ENCODE measurements at regions of chr3 and their contacts with region 1.

Region 1: GRCh38 chr3:8441969-8442559 is 59.6 kb upstream of the LMCD1 start:
- DNase-seq: peak in 2 of 4 donors; percentile 68 to 79
- ATAC-seq: peak; percentile 61
- H3K4me3 ChIP-seq: no peak overlapping the region
- H3K27ac ChIP-seq: no peak overlapping the region
- H3K4me1 ChIP-seq: peaks cover 26 to 27% of the 10 kb centered on the region in 2 donors
- H3K27me3 ChIP-seq: no peaks in the 10 kb centered on the region
- CTCF ChIP-seq: peak; percentile 50 to 70

Region 2: GRCh38 chr3:8550611-8551010 is 108.5 kb after region 1 on chr3:
- intact Hi-C with region 1: no loop called
- DNase-seq: no peak
- ATAC-seq: no peak
- H3K4me3 ChIP-seq: no peak overlapping the region
- H3K27ac ChIP-seq: peak overlapping the region in 1 of 2 donors; percentile 2
- H3K4me1 ChIP-seq: peaks cover 0 to 3% of the 10 kb centered on the region in 2 donors
- H3K27me3 ChIP-seq: no peaks in the 10 kb centered on the region
- CTCF ChIP-seq: no peak

Region 3: DNA sequence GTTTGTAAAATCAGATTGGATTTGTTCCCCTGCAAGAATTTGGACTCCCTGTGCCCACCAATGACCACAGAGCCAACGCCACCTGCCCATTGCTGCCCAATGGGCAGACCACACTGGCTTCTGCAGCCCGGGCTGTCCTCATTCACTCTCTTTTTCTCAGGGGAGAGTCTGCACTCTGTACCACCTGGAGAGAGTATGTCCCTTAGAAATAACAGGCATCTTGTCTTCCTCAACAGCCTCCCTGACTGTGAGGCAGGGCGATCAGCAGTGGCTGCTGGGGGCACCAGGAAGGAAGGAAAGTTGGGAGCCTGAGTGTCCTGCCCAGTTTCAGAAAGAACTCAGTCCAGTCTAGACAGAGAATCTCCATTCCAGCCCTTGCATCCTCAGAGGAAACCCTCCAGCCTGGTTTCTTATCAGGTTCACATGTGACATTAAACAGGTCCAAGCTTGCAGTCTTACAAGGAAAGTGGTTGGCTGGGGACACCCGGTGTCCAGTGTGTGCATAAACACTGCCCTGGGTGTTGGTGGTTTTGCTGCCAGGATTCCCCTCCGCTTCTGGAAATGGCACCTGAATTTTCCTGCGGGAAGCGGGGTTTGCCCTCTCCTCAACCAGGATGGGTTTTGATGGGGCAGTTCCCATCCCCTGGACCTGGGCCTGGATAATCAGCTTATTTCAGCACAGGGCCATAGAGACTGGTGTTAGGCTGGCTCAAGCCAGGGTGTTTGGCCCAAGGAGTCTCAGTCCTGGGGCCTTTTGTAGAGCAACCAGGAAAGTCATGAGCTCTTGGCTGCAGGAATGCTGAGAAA is 165.4 kb after region 1 on chr3:
- intact Hi-C with region 1: no loop called
- DNase-seq: peak in 1 of 4 donors; percentile 66
- ATAC-seq: peak; percentile 94
- H3K4me3 ChIP-seq: no peak overlapping the region
- H3K27ac ChIP-seq: no peak overlapping the region
- H3K4me1 ChIP-seq: peaks cover 0 to 5% of the 10 kb centered on the region in 2 donors
- H3K27me3 ChIP-seq: no peaks in the 10 kb centered on the region
- CTCF ChIP-seq: peak; percentile 40 to 44

Region 4: GRCh38 chr3:8622873-8623691 is 181.0 kb after region 1 on chr3:
- intact Hi-C with region 1: loop called (anchors 5 kb)
- DNase-seq: peak in 3 of 4 donors; percentile 68 to 86 (median 73)
- ATAC-seq: peak; percentile 96
- H3K4me3 ChIP-seq: no peak overlapping the region
- H3K27ac ChIP-seq: no peak overlapping the region
- H3K4me1 ChIP-seq: peaks cover 8 to 12% of the 10 kb centered on the region in 2 donors
- H3K27me3 ChIP-seq: no peaks in the 10 kb centered on the region
- CTCF ChIP-seq: peak; percentile 81 to 87

Measured in left lung (tissue), 14 donors.